Posterior vena cava (tissue), 2 donors: ENCODE measurements at regions of chr19 and their contacts with region 1.

Region 1: GRCh38 chr19:14073261-14073924 is 807 bp downstream of the MISP3 start:
- DNase-seq: peak; percentile 93

Region 2: DNA sequence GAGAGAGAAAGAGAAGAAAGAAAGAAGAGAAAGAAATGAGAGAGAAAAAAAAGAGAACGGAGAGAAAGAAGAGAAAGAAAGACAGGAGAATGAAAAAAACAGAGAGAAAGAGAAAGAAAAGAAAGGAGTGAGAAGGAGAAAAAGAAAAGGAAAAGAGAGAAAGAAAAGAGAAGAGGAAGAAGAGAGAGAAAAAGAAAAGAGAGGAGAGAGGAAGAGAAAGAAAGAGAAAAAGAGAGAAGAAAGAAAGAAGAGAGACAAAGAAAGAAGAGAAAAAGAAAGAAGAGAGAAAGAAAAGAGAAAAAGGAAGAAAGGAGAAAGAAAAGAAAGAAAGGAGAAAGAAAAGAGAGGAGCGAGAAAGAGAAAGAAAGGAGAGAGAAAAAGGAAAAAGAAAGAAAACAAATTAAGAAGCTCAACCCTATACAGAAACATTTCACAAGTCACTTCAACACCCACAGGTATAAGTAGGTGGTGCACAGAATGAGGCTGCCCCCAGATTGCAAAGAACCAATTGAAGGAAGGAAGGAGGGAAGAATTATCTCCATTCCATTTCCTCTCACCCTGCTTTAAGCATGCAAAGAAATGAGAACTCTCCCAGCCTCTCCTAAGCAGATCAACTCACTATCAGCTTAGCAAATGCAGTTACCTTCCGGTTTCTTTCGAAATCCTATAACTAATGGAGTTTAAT is 468.3 kb before region 1 on chr19:
- intact Hi-C with region 1: loop called in 1 of 2 experiments (anchors 5 kb)
- DNase-seq: no peak

Region 3: GRCh38 chr19:13880059-13881043 is 193.0 kb before region 1 on chr19:
- intact Hi-C with region 1: loop called (anchors 1 to 5 kb)
- DNase-seq: peak; percentile 100